ENCODE measurements at regions of chr4 and their contacts with region 1.

Region 1: DNA sequence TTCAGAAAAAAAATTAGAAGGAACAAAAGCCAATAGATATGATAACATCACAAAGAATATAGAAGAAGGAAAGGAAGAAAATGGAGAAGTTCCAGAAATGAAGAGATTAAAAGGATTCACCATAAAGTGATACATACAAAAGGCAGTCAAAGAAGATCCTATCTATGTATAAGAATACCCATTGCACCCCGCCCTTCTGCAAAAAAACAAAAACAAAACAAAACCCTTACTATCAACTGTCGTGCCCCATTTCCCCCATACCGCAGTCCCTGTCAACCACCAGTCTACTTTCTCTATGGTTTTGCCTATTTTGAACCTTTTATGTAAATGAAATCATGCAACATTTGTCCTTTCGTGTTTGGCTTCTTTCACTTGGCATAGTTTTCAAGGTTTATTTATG is 385.6 kb downstream of the PRDM5 start:
- DNase-seq: no peak
- H3K4me3 ChIP-seq: no peak overlapping the region
- H3K27ac ChIP-seq: no peak overlapping the region
- H3K4me1 ChIP-seq: no peaks in the 10 kb centered on the region
- H3K27me3 ChIP-seq: no peaks in the 10 kb centered on the region
- CTCF ChIP-seq: no peak
- EP300 ChIP-seq: no peak
- POLR2A ChIP-seq: no peak

Region 2: DNA sequence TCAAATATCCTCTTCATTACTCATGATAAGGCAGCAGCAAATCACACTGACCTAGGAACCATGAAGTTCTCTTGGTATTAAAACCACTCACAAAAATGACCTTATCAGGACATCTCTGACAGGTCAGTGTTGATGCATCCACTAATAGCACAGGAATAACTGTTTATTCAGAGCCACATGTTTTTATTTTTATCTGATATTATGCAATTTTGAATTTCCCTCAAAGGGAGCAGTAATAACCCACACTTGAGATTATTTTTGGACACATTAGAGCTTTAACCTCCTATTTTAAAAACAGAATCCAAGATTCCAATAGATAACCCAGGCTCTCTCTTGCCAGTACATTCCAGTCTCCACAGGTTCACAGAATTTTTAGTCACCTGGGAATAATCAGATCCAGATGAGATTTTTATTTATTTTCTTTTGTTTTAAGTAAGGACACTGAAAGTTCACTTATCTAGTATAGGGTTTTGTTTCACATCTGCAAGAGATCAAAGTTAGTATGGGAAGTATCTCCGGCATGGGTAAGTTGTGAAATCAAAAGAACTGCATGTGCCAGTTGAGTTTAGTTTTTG is 1437.6 kb before region 1 on chr4:
- intact Hi-C with region 1: loop called in 1 of 4 experiments (anchors 10 kb)
- DNase-seq: no peak
- H3K4me3 ChIP-seq: no peak overlapping the region
- H3K27ac ChIP-seq: no peak overlapping the region
- H3K4me1 ChIP-seq: no peaks in the 10 kb centered on the region
- H3K27me3 ChIP-seq: no peaks in the 10 kb centered on the region
- CTCF ChIP-seq: no peak
- EP300 ChIP-seq: no peak
- POLR2A ChIP-seq: no peak

Region 3: GRCh38 chr4:120156120-120156718 is 380.7 kb before region 1 on chr4:
- intact Hi-C with region 1: no loop called
- DNase-seq: peak in 1 of 5 donors; percentile 20
- H3K4me3 ChIP-seq: no peak overlapping the region
- H3K27ac ChIP-seq: no peak overlapping the region
- H3K4me1 ChIP-seq: no peaks in the 10 kb centered on the region
- H3K27me3 ChIP-seq: no peaks in the 10 kb centered on the region
- CTCF ChIP-seq: peak; percentile 51 to 62 (median 57)
- EP300 ChIP-seq: no peak
- POLR2A ChIP-seq: no peak

Region 4: DNA sequence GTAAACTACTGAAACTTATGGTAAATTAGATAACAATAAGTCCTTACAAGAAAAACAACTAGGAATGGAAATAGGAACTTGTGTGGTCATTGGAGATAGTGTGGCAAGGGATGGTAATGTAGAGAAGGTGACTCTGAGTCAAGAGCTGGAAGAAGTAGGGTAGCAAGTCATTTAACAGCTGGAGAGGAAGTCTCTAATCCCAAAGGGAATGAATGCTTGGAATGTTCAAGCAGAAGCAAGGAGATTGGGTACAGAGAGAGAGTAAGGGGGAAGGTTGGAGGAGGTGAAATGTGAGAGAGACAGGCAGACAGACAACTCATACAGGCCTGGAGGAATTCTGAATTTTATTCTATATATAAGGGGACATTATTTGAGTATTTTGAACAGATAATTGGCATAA is 209.6 kb before region 1 on chr4:
- intact Hi-C with region 1: no loop called
- DNase-seq: no peak
- H3K4me3 ChIP-seq: no peak overlapping the region
- H3K27ac ChIP-seq: no peak overlapping the region
- H3K4me1 ChIP-seq: no peaks in the 10 kb centered on the region
- H3K27me3 ChIP-seq: no peaks in the 10 kb centered on the region
- CTCF ChIP-seq: no peak
- EP300 ChIP-seq: no peak
- POLR2A ChIP-seq: no peak

Region 5: DNA sequence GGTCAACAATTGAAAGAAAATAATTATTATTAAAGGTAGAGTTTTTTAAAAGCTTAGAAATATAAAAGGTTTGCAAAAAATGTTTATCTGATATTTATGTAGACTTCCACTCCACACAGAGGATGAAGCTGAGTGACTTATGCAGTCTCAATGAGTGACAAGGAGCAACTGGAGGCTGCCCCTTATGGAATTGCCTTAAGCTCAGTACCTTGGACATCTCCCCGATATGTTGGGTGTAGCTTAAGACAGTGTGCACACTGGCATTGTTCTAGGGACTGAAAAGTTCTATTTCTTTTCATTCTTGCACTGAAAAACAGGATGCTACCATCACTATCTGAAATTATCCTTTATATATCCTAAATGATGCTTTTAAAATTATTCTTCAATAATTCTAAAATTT is 93.5 kb after region 1 on chr4:
- intact Hi-C with region 1: no loop called
- DNase-seq: no peak
- H3K4me3 ChIP-seq: no peak overlapping the region
- H3K27ac ChIP-seq: no peak overlapping the region
- H3K4me1 ChIP-seq: no peaks in the 10 kb centered on the region
- H3K27me3 ChIP-seq: no peaks in the 10 kb centered on the region
- CTCF ChIP-seq: no peak
- EP300 ChIP-seq: no peak
- POLR2A ChIP-seq: no peak

Region 6: DNA sequence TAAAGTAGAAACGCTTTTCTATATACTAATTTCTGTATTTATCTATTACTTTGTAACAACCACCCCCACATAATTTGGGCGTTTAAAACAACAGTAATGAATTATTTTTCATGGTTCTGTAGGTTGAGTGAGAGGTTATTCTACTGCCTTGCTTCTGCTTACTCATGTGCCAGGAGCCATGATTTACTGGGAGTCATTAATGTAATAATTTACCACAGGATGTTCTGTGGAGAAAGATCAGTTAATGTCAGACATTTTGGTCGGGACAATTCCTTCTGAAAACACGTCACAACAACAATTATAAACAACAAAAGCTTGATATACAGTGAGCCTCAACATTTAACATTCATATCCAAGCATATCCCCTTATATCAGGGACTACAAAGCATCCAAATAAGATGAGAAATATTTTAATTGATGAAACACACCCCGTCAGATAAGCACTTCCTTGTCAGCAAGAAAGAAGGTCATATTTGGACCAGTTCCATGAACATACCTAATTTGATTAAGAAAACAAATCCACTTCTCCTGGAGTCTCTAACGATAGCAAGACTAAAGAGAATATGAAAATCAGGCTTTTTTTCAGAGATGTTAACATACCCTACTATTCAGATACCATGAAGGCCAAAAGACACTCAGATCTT is 147.1 kb after region 1 on chr4:
- intact Hi-C with region 1: no loop called
- DNase-seq: no peak
- H3K4me3 ChIP-seq: no peak overlapping the region
- H3K27ac ChIP-seq: no peak overlapping the region
- H3K4me1 ChIP-seq: no peaks in the 10 kb centered on the region
- H3K27me3 ChIP-seq: no peaks in the 10 kb centered on the region
- CTCF ChIP-seq: no peak
- EP300 ChIP-seq: no peak
- POLR2A ChIP-seq: no peak

Measured in ovary (tissue), 10 donors.